PC-3 (cell line): ENCODE measurements at regions of chr2 and their contacts with region 1.

Region 1: DNA sequence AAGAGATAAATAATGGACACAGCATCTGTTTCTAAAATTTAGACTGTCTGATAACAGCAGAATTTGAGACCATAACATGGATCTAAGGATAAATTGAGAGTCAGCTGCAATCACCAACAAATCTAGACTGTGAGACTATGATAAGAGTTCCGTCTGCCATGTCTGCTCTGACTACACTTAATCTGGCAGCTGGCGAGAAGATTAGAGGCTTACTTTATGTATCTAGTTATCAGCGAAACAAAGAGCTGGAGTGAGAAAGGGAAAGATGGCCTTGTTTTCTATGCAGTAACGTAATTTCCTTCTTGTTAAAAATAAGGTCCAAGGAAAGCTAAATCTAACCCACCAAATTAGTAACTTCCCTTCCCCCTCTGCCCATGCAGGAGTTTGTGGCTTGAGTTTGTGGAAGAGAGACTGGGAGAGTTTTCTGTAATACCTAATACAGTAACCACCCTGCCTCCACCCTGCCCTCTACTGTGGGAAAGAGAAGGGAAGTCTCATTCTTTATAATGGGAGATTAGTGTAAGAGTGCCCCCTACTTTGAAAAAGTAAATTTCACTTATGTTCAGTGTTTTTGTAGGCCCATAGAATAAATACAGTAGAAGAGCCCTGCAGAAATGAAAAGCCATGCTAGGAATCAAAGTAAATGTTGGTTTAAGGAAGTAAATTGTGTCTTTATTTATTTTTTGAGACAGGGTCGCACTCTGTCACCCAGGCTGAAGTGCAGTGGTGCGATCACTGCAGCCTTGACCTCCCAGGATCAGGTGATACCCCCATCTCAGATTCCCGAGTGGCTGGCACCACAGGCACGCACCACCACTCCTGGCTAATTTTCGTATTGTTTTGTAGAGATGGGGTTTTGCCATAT is 27.5 kb downstream of the EML4 start:
- DNase-seq: peak; percentile 74
- ATAC-seq: peak; percentile 55
- H3K4me3 ChIP-seq: no peak overlapping the region
- H3K27ac ChIP-seq: no peak overlapping the region
- H3K4me1 ChIP-seq: peaks cover 40% of the 10 kb centered on the region
- H3K27me3 ChIP-seq: no peaks in the 10 kb centered on the region
- CTCF ChIP-seq: peak; percentile 82

Region 2: DNA sequence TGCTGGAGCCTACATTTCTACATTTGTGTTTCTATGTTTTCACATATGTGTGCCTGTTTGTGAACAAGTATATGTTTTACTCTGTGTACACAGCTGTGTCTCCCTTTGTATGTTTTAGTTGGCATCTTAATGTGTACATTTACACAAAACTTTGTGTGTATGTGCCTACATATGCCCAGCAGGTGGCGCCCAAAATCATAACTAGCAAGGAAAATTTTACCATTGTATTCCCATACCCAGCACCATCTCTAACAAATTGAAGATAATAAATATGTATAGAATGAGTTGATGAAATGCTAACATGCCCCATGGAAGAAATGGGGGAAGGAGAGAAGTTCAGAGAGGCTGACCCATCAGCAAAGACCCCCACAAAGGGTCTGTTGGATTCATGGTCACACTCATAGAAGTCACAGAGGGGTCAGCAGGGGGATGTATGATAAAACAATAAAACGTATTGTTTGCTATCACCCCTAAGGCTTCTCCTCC is 100.7 kb before region 1 on chr2:
- CTCF ChIA-PET with region 1: no interaction called
- POLR2A ChIA-PET with region 1: no interaction called
- intact Hi-C with region 1: loop called (anchors 1 kb)
- DNase-seq: peak; percentile 86
- ATAC-seq: peak; percentile 52
- H3K4me3 ChIP-seq: no peak overlapping the region
- H3K27ac ChIP-seq: no peak overlapping the region
- H3K4me1 ChIP-seq: peaks cover 6% of the 10 kb centered on the region; the same call in 1 of the 2 replicates
- H3K27me3 ChIP-seq: no peaks in the 10 kb centered on the region
- CTCF ChIP-seq: peak; percentile 92

Region 3: DNA sequence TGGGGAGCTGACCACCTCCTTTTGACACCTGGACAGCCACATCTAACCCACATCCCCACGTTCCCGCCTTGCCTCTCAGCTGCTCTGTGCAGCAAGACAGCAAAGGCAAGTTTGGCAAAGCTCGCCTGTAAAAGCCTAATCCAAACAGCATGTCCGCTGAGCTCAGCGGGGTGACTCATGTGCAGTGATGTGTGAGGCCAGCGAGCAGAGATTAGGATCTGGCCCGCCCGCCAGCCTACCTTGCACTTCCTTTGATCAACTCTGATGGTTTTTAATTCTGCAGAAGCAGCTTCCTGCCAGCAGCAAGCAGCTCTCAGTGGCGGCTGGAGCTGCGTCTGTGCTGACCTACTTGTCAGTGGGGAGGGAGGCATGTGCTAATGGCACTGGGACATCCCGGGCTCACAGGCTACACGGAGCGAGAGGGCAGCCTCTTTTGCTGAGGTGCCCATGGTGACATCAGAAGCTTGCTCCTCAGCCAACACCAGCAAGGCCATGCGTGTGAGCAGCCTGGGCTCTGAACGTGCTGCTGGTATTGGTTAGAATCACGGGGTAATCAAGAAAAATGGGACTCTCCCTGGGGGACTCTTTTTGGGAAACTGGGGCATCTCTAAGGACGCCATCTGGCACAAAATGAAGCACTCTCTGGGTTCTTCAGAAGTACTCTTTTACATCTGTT is 63.5 kb before region 1 on chr2:
- CTCF ChIA-PET with region 1: interaction called, 5 read pairs
- POLR2A ChIA-PET with region 1: no interaction called
- intact Hi-C with region 1: loop called (anchors 2 kb)
- DNase-seq: peak; percentile 97
- ATAC-seq: peak; percentile 89
- H3K4me3 ChIP-seq: peak overlapping the region; percentile 38; the same call in 1 of the 2 replicates
- H3K27ac ChIP-seq: peak overlapping the region; percentile 96
- H3K4me1 ChIP-seq: peaks cover 53% of the 10 kb centered on the region
- H3K27me3 ChIP-seq: no peaks in the 10 kb centered on the region
- CTCF ChIP-seq: no peak

Region 4: GRCh38 chr2:42238644-42239288 is 42.1 kb after region 1 on chr2:
- CTCF ChIA-PET with region 1: no interaction called
- POLR2A ChIA-PET with region 1: no interaction called
- intact Hi-C with region 1: loop called (anchors 5 kb)
- DNase-seq: peak; percentile 52
- ATAC-seq: peak; percentile 82
- H3K4me3 ChIP-seq: no peak overlapping the region
- H3K27ac ChIP-seq: peak overlapping the region; percentile 61
- H3K4me1 ChIP-seq: peaks cover 15% of the 10 kb centered on the region
- H3K27me3 ChIP-seq: no peaks in the 10 kb centered on the region
- CTCF ChIP-seq: peak; percentile 73